IMR-90 (cell line): ENCODE measurements at regions of chrX and their contacts with region 1.

Region 1: DNA sequence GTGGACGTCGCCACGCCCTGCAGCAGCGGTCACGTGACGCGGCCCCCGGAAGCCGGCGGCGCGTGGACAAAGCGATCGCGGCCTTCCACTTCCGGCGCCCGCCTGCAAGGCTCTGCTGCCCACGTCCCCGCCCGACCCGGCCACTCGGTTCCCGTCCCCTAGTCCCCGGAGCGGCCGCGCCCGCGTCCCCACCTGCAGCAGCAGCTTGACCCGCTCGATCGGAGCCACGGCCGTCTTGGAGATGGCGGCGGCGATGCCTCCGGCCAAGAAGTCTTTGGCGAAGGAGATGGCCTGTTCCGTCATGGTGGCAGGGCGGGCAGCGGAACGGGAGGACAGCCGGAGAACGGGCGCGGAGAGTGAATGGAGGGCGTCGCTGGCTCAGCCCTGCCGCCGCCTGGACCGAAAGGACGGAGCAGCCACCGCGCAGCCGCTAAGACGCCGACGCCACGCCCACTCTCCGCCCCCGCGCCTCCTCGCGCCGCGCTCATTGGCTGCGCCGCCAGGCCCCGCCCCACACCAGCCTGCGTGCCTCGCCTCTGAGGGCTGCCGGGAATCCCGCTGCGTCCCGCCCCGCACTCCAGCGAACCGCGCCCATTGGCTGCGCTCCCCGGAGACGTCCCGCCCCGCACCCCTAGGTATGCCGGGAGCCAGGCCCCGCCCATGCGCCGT is at the start of gene SLC25A6:
- DNase-seq: peak; percentile 95
- ATAC-seq: peak; percentile 94
- H3K4me3 ChIP-seq: peak within 1 kb of the TSS; percentile 94
- H3K27ac ChIP-seq: peak within 1 kb of the TSS; percentile 97
- H3K4me1 ChIP-seq: no peaks in the 10 kb centered on the region; the same call in 1 of the 2 replicates
- H3K27me3 ChIP-seq: no peaks in the 10 kb centered on the region
- CTCF ChIP-seq: no peak
- POLR2A ChIP-seq: peak; percentile 97
- RAD21 ChIP-seq: no peak
- total RNA-seq, gene SLC25A6: 166 and 264 TPM in 2 replicates

Region 2: DNA sequence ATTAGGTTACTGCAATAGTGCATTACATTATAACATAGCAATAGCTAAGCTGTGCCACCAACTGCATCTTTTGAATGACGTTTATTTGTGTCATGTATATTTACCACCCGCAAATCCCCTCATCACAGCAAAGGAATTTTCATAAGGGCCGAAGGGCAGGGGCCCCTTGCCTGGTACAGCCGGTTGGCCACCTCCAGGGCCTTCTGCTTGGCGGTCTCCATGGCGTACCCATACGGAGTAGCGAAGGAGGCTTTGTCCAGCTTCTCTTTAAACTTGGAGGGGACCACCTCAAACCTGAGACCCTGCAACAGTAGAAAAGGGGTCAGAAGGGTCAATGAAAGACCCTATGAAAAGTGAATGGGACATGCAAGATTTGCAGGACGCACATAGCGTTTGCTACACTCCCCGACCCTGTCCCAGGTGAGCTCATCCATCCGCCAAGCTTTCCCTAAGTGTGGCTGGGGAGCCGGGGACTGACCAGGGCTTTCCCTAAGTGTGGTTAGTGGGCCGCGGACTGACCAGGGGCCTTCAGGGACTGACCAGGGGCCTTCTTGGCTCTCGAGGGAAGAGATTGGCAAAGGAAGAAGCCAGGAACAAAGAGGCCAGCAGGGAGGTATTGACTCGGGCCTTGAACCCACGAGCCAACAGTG is 50.3 kb after region 1 on chrX:
- CTCF ChIA-PET with region 1: no interaction called
- POLR2A ChIA-PET with region 1: no interaction called
- dilution Hi-C with region 1: no loop called
- in situ Hi-C with region 1: no loop called
- intact Hi-C with region 1: loop called (anchors 10 kb)
- DNase-seq: no peak
- ATAC-seq: no peak
- H3K4me3 ChIP-seq: no peak overlapping the region
- H3K27ac ChIP-seq: no peak overlapping the region
- H3K4me1 ChIP-seq: no peaks in the 10 kb centered on the region
- H3K27me3 ChIP-seq: no peaks in the 10 kb centered on the region
- CTCF ChIP-seq: no peak
- POLR2A ChIP-seq: no peak
- RAD21 ChIP-seq: no peak